Heart right ventricle (tissue), 16 donors: ENCODE measurements at regions of chr21 and their contacts with region 1.

Region 1: GRCh38 chr21:26550326-26550725 is 22.8 kb downstream of the CYYR1 start:
- DNase-seq: no peak
- ATAC-seq: no peak
- H3K4me3 ChIP-seq: peak overlapping the region in 1 of 10 donors; percentile 8
- H3K27ac ChIP-seq: peak overlapping the region in 6 of 10 donors; percentile 18 to 83 (median 40)
- H3K4me1 ChIP-seq: peaks cover 0 to 58% (median 8%) of the 10 kb centered on the region in 9 donors
- H3K27me3 ChIP-seq: no peaks in the 10 kb centered on the region
- CTCF ChIP-seq: no peak

Region 2: GRCh38 chr21:25881525-25882376 is 668.6 kb before region 1 on chr21:
- intact Hi-C with region 1: loop called in 1 of 10 experiments (anchors 10 kb)
- DNase-seq: peak; percentile 63 to 65
- ATAC-seq: peak; percentile 63 to 85 (median 72)
- H3K4me3 ChIP-seq: no peak overlapping the region
- H3K27ac ChIP-seq: no peak overlapping the region
- H3K4me1 ChIP-seq: peaks cover 0 to 17% (median 8%) of the 10 kb centered on the region in 9 donors
- H3K27me3 ChIP-seq: no peaks in the 10 kb centered on the region
- CTCF ChIP-seq: peak; percentile 88 to 98 (median 96)

Region 3: DNA sequence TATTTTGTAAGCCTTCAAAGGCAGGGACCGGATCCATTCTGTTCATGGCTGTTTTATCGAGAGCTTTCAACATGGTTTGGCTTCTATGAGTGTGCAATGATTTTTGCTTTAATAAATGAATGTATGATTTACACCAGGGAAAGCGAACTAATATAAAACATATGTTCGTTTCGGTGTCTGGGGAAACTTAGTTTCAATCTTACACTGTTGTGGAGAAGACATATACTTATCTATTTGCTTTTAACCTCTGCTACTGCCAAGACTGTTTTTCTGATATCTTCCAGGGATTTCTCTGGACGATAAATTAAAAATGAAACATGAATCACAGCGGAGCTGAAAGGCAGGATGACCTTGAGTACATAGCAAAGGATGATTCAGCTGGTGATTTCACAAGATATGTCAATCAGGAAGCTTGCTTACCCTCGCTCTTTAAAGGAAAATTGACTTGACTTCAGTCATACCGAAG is 37.4 kb after region 1 on chr21:
- intact Hi-C with region 1: no loop called
- DNase-seq: no peak
- ATAC-seq: peak in 3 of 8 donors; percentile 38 to 62 (median 41)
- H3K4me3 ChIP-seq: peak overlapping the region in 6 of 10 donors; percentile 16 to 33 (median 23)
- H3K27ac ChIP-seq: peak overlapping the region in 3 of 10 donors; percentile 9 to 46 (median 17)
- H3K4me1 ChIP-seq: peaks cover 0 to 13% (median 0%) of the 10 kb centered on the region in 9 donors
- H3K27me3 ChIP-seq: no peaks in the 10 kb centered on the region
- CTCF ChIP-seq: no peak